ENCODE measurements at regions of chr15 and their contacts with region 1.

Region 1: DNA sequence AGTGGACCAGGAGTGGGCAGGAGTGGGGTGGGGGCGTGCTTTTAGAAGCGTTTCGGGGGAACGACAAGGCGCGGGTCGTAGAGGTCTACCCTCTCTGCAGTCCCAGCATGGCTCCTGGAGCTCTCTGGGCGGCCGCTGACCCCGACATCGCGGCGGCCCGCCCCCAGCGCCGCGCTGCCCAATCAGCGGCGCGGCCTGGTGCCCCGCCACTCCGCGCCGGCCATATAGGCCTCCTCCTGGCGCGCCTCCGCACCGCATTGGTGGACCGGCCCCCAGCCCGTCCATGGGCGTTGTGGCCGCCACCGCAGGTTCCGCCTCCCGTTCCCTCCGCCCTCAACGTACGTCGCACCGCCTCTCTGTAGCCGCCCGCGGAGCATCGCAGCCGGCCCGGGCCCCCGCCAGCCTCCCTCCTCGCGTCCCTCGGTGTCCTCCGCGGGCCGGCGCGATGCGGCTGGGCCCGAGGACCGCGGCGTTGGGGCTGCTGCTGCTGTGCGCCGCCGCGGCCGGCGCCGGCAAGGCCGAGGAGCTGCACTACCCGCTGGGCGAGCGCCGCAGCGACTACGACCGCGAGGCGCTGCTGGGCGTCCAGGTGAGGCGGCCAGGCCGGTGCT is at the start of gene RCN2:
- DNase-seq: peak; percentile 96 to 97
- ATAC-seq: peak; percentile 96 to 100 (median 98)
- H3K4me3 ChIP-seq: peak within 1 kb of the TSS; percentile 62
- H3K4me3 Mint-ChIP-seq: peak within 1 kb of the TSS; percentile 91
- H3K27ac ChIP-seq: peak within 1 kb of the TSS; percentile 72
- H3K27ac Mint-ChIP-seq: peak within 1 kb of the TSS; percentile 86
- H3K4me1 ChIP-seq: peaks cover 5% of the 10 kb centered on the region
- H3K4me1 Mint-ChIP-seq: peaks cover 20 to 29% of the 10 kb centered on the region in 2 donors
- H3K27me3 ChIP-seq: no peaks in the 10 kb centered on the region
- H3K27me3 Mint-ChIP-seq: peaks cover 0 to 2% of the 10 kb centered on the region in 2 donors
- CTCF ChIP-seq: no peak
- total RNA-seq, gene RCN2: 24.1 to 30.0 (median 25.0) TPM

Region 2: DNA sequence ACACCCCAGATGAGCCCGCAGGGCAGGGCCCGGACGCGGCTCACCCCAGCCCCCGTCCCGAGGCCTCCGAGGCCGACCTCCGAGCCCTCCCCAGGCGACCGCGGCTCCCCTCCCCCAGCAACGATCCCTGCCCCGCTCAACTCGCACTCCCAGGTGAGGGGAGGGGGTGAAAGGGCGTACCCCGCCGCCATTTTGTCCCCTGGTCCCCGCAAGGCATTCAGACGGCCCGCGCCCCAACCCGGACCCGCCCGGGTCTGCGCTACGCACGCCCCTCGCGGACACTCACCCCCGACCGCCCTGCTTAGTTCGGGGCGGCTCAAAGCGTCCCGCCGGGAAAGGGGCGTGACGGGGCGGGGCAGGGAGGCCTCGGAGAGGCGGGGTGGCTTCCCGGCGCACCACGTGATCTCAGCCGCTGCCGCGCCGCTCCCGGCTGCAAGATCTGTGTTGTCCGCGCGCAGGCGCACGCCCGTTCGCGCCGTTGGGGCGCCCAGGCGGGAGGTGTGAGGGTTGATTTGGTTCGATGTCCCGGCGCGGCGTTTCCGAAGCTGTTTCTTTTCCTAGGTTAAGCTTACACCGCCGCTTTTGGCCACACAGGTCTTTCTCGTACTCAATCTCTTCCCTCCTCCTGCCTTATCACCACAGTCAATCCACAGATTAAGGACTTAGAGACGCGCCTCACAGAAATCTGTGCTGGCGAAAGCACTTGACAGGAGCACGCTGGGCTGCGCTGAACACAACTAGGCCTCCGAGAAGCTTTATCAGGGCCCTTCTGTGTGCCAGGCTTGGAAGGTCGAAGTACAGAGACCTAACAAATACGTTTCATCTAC is 26.3 kb before region 1 on chr15 and contains the start of gene SCAPER:
- intact Hi-C with region 1: loop called (anchors 1 kb)
- DNase-seq: peak; percentile 85 to 95
- ATAC-seq: peak; percentile 88 to 94 (median 92)
- H3K4me3 ChIP-seq: peak within 1 kb of the TSS; percentile 87
- H3K4me3 Mint-ChIP-seq: peak within 1 kb of the TSS; percentile 94
- H3K27ac ChIP-seq: peak within 1 kb of the TSS; percentile 83
- H3K27ac Mint-ChIP-seq: peak within 1 kb of the TSS; percentile 88 to 95
- H3K4me1 ChIP-seq: peaks cover 14% of the 10 kb centered on the region
- H3K4me1 Mint-ChIP-seq: peaks cover 19 to 34% of the 10 kb centered on the region in 2 donors
- H3K27me3 ChIP-seq: no peaks in the 10 kb centered on the region
- H3K27me3 Mint-ChIP-seq: no peaks in the 10 kb centered on the region
- CTCF ChIP-seq: no peak
- total RNA-seq, gene SCAPER: 48.1 to 53.6 (median 51.8) TPM

Region 3: GRCh38 chr15:77070495-77071304 is 139.2 kb after region 1 on chr15 and contains the start of gene TSPAN3:
- intact Hi-C with region 1: loop called (anchors 2 kb)
- DNase-seq: peak; percentile 88 to 95
- ATAC-seq: peak; percentile 97 to 98 (median 97)
- H3K4me3 ChIP-seq: peak within 1 kb of the TSS; percentile 64
- H3K4me3 Mint-ChIP-seq: peak within 1 kb of the TSS; percentile 88
- H3K27ac ChIP-seq: peak within 1 kb of the TSS; percentile 66
- H3K27ac Mint-ChIP-seq: peak within 1 kb of the TSS; percentile 65 to 90
- H3K4me1 ChIP-seq: peaks cover 16% of the 10 kb centered on the region
- H3K4me1 Mint-ChIP-seq: peaks cover 39 to 40% of the 10 kb centered on the region in 2 donors
- H3K27me3 ChIP-seq: no peaks in the 10 kb centered on the region
- H3K27me3 Mint-ChIP-seq: no peaks in the 10 kb centered on the region
- CTCF ChIP-seq: no peak
- total RNA-seq, gene TSPAN3: 18.7 to 37.4 (median 29.9) TPM